ENCODE measurements at regions of chr19 and their contacts with region 1.

Region 1: DNA sequence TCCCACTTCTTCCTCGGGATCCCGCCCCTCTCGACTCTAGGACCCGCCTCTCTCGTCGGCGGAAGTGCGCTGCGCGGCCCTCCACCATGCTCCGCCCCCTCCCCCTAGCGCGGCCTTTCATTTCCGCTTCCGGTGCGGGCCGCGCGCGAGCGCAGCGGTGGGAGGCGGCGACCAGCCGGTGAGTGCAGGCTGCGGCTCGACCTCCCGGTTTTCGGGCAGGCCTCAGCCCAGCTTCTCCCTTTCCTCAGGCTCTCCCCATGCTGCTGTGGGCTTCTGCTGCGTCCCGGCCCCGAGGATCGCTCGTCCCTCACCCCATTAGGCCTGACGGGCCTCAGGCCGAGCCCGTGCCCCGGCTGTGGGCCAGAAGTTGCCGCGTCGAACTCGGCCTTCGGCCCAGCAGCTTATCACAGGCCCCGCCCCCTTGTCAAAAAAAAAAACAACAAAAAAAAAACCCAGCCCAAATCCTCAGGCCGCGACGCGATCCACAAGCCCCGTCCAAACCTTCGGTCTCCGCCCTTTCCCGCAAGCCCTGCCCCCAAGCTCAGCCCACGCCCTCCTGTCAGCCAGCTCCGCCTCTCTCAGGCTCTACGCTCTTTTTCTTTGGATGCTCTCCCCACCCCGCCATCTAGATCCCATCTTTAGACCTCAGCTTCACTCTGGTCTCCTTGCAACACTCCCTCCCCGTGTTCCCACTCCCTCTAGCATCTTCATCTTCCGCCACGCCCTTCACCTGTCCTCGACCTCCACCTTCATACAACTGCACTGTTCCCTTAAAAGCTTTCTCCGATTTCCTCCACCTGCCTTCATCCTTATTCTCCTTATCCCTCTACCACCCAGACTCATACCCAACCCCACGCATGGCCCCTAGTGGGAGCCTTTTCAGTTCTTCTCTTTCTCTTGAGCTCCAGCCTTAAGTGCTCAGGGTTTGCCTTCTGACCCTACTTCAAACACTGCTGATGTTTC is at the start of gene CLASRP:
- DNase-seq: peak; percentile 85
- H3K4me3 ChIP-seq: peak within 1 kb of the TSS; percentile 55 to 95 (median 69)
- H3K27ac ChIP-seq: peak within 1 kb of the TSS; percentile 74
- H3K4me1 ChIP-seq: peaks cover 11% of the 10 kb centered on the region
- H3K27me3 ChIP-seq: no peaks in the 10 kb centered on the region
- CTCF ChIP-seq: no peak
- POLR2A ChIP-seq: peak; percentile 91
- total RNA-seq, gene CLASRP: 70.7 and 77.0 TPM in 2 replicates

Region 2: GRCh38 chr19:45001087-45001739 is 38.0 kb before region 1 on chr19 and contains the start of gene RELB:
- CTCF ChIA-PET with region 1: no interaction called
- POLR2A ChIA-PET with region 1: interaction called, 5 read pairs
- dilution Hi-C with region 1: no loop called
- intact Hi-C with region 1: loop called (anchors 1 kb)
- DNase-seq: peak; percentile 85
- H3K4me3 ChIP-seq: peak within 1 kb of the TSS; percentile 60 to 80 (median 68)
- H3K27ac ChIP-seq: peak within 1 kb of the TSS; percentile 96
- H3K4me1 ChIP-seq: peaks cover 8% of the 10 kb centered on the region
- H3K27me3 ChIP-seq: no peaks in the 10 kb centered on the region
- CTCF ChIP-seq: no peak
- POLR2A ChIP-seq: no peak
- total RNA-seq, gene RELB: 10.5 and 13.2 TPM in 2 replicates

Region 3: GRCh38 chr19:45079063-45079910 is 40.1 kb after region 1 on chr19 and contains the start of gene GEMIN7:
- CTCF ChIA-PET with region 1: no interaction called
- POLR2A ChIA-PET with region 1: no interaction called
- dilution Hi-C with region 1: no loop called
- intact Hi-C with region 1: loop called (anchors 5 kb)
- DNase-seq: peak; percentile 75
- H3K4me3 ChIP-seq: peak within 1 kb of the TSS; percentile 57 to 79 (median 58)
- H3K27ac ChIP-seq: peak within 1 kb of the TSS; percentile 50
- H3K4me1 ChIP-seq: peaks cover 16% of the 10 kb centered on the region
- H3K27me3 ChIP-seq: no peaks in the 10 kb centered on the region
- CTCF ChIP-seq: peak in 1 of 2 donors; percentile 6
- POLR2A ChIP-seq: no peak
- total RNA-seq, gene GEMIN7: 30.3 and 34.2 TPM in 2 replicates

Measured in endothelial cell of umbilical vein (primary cell).